Activated T-helper 1 cell treated with anti-CD3 and anti-CD28 coated beads, Interleukin-12 subunit alpha, Interleukin-12 subunit beta, Interleukin-2, Interleukin-4 antibody, amounts not matched to agents 30 ng/mL and 10 ng/mL and 1 ng/mL, durations not matched to agents 14 hours and 24 hours and 36 hours (primary cell): ENCODE measurements at regions of chr2 and their contacts with region 1.

Region 1: GRCh38 chr2:201451292-201452057 is at the starts of genes STRADB and TRAK2:
- DNase-seq: peak; percentile 94
- H3K4me3 Mint-ChIP-seq: peak within 1 kb of the TSS; percentile 94
- H3K27ac Mint-ChIP-seq: peak within 1 kb of the TSS; percentile 93
- H3K4me1 Mint-ChIP-seq: peaks cover 43% of the 10 kb centered on the region
- H3K27me3 Mint-ChIP-seq: peaks cover 12% of the 10 kb centered on the region
- total RNA-seq, gene STRADB: 14.6 and 18.1 TPM in 2 replicates
- total RNA-seq, gene TRAK2: 24.7 and 28.9 TPM in 2 replicates

Region 2: GRCh38 chr2:201071479-201072200 is 379.8 kb before region 1 on chr2 and contains the starts of genes HYCC2 and NDUFB3:
- intact Hi-C with region 1: loop called (anchors 5 kb)
- DNase-seq: peak; percentile 90
- H3K4me3 Mint-ChIP-seq: peak within 1 kb of the TSS; percentile 90
- H3K27ac Mint-ChIP-seq: peak within 1 kb of the TSS; percentile 95
- H3K4me1 Mint-ChIP-seq: peaks cover 49% of the 10 kb centered on the region
- H3K27me3 Mint-ChIP-seq: no peaks in the 10 kb centered on the region
- total RNA-seq, gene HYCC2: 26.1 and 29.4 TPM in 2 replicates
- total RNA-seq, gene NDUFB3: 105 and 121 TPM in 2 replicates

Region 3: DNA sequence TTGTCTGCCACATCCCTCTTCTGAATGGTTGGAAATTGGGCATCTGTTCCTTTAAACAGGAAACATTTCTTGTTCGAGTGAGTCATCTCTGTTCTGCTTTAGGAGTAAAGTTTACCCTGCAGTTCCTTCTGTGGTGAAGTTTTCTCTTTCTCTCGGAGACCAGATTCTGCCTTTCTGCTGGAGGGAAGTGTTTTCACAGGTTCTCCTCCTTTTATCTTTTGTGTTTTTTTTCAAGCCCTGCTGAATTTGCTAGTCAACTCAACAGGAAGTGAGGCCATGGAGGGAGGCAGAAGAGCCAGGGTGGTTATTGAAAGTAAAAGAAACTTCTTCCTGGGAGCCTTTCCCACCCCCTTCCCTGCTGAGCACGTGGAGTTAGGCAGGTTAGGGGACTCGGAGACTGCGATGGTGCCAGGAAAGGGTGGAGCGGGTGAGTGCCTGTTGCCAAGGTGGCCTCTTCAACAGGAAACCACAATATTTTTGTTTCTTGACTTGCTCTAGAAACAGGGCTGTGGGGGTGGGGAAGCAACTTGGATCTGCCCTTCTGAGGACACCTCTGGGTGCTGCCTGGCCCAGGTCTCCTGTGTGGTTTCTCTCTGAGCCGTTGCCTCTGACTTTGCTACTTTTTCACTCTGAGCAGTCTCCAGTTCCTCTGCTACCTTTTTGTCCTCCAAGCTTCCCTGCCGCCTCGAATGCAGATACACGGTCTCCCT is 193.4 kb before region 1 on chr2:
- intact Hi-C with region 1: loop called (anchors 2 kb)
- DNase-seq: peak; percentile 93
- H3K4me3 Mint-ChIP-seq: peak overlapping the region; percentile 91
- H3K27ac Mint-ChIP-seq: peak overlapping the region; percentile 100
- H3K4me1 Mint-ChIP-seq: peaks cover 84% of the 10 kb centered on the region
- H3K27me3 Mint-ChIP-seq: no peaks in the 10 kb centered on the region

Region 4: DNA sequence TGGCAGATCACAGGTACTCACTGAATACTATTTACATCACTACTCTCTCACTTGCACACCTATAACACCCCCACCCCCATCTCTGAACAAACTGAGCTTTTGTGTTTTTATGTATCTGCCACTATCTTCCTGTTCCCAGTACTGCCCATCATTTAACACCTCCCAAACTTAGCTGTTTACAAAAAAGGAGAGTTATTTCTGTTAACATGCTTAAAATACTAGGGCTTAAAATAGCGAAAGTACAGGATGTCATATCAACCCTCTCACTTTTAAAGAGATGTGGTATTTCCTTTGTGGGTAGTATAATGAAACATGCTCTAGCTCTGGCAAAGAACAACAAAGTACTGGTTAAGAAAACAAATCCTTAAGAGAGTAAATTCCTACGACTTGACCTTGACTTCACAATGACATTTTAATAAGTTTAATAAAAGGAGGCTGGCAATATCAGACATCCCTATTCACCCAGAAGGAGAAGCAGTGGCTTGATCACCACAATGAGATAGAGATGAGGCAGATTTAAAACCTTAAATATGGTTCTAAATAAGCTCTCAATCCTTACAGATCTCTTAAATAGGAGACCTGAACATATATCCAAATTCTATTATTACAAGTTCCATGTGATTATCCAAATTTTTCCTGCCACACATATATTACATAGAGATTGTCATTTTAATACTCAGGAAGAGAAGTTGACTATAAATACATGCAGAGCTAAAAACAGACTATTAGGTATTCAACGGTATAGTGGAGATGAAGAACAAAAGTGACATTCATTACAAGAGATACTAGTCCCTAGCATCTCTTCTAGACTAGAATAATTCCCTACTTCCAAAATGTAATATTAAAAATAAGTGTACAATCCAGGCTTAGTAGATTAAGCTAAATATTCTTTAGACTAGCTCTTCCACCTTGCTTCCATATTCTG is 37.1 kb before region 1 on chr2:
- intact Hi-C with region 1: loop called (anchors 1 kb)
- DNase-seq: no peak
- H3K4me3 Mint-ChIP-seq: no peak overlapping the region
- H3K27ac Mint-ChIP-seq: no peak overlapping the region
- H3K4me1 Mint-ChIP-seq: peaks cover 8% of the 10 kb centered on the region
- H3K27me3 Mint-ChIP-seq: no peaks in the 10 kb centered on the region

Region 5: DNA sequence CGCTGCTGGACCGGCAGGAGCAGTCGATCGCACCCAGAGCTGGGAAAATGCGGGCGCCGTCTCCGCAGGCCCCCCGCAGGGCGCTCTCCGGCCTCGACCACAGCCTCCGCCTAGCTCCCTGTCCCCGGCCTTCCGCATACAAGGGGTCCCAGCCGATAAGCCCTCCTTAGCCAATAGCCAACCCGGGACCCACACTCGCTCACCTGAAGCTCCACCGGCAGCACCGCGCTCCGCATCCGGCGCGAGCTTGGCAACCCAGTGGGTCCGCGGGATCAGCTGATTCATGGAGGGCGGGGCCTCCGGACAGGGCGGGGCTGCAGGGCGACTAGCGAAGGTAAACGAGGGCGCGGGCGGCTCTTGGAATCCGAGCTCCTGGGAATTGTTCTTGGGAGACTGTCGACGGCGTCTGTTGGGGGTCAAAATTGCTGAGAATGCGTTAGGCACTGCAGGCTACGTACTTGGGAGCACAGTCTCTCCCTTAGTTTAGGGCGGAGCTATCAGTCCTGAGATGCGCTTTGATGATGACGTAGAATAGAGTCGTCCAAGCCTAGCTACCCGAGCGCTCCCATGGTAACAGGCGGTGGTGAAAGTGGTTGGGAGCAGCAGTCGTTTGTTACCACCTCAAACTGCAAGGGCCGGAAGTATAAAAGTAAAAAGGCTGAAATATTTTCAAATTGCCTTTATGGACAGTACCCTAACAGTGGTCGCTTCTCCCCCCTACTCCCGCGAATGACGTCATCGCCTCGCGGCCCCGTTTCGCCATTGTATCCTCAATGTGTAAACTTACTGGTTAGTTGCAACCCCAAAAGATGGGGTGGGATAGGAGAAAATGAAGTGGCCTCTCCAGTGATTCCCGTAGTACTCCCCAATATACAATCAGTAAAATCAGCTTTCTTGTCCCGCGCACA is 329.5 kb after region 1 on chr2 and contains the start of gene ALS2:
- intact Hi-C with region 1: loop called (anchors 1 kb)
- DNase-seq: peak; percentile 92
- H3K4me3 Mint-ChIP-seq: peak within 1 kb of the TSS; percentile 95
- H3K27ac Mint-ChIP-seq: peak within 1 kb of the TSS; percentile 92
- H3K4me1 Mint-ChIP-seq: peaks cover 31% of the 10 kb centered on the region
- H3K27me3 Mint-ChIP-seq: peaks cover 24% of the 10 kb centered on the region
- total RNA-seq, gene ALS2: 11.7 and 12.7 TPM in 2 replicates

Region 6: DNA sequence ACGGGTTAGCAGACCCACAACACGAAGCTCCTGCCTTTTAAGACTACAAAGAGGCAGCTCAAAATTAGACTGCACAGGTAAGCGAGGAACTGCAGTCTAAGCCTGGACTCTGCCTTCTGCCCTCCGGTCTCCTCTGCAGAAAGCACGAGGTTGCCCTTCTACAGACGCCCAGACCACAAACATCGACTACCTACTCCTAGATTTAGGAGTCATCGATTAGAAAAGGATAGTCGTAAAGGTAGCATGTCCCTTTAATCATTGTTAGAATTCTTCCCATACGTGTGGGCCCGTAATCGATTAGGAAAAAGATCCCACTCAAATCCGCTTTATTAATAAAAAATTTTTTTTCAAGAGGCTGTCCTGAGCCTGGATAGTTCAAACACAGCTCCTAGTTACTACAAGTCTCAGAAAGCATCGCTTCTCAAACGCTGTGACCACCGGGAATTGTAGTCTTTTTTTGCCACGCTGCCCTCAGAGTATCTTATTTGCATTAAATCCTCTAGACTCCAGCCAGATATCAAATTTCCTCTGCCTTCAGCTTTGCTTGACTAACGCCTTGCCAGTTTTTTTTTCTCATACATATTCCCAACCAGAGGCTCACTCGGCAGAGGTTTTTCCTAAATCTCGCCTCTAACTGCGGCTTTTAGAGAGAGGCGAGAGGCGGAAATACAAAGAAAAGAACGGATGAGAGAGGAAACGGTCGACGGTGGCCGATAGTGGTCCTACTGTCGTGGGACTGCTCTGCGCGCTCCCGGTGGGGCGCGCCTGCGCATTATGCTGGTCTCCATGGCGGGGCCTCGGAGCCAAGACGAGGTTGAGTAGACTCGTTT is 1460.3 kb after region 1 on chr2 and contains the starts of genes CARF and WDR12:
- intact Hi-C with region 1: loop called (anchors 2 kb)
- DNase-seq: peak; percentile 87
- H3K4me3 Mint-ChIP-seq: peak within 1 kb of the TSS; percentile 96
- H3K27ac Mint-ChIP-seq: peak within 1 kb of the TSS; percentile 98
- H3K4me1 Mint-ChIP-seq: peaks cover 31% of the 10 kb centered on the region
- H3K27me3 Mint-ChIP-seq: no peaks in the 10 kb centered on the region
- total RNA-seq, gene CARF: 3.6 and 4.3 TPM in 2 replicates
- total RNA-seq, gene WDR12: 149 and 165 TPM in 2 replicates